ENCODE measurements at regions of chr7 and their contacts with region 1.

Region 1: DNA sequence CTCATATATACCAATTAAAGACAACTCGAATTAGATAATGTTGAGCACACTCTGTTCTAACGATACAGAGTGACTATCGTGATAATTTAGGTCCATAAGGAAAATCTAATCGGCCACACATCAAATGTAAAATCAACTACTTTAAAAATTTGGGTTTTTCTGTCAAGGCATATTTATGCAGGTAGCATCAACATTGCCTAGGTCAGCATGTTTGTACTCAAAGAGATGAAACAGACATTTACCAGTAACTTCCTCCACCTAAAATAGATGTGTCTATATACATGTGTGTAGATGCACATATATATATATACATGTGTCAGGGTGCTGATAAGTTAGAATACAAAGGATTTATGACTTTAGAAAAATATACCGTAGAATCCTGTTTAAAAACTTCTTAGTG is 22.0 kb downstream of the PSMC2 start:
- DNase-seq: no peak
- H3K4me3 ChIP-seq: no peak overlapping the region
- H3K27ac ChIP-seq: no peak overlapping the region
- H3K4me1 ChIP-seq: no peaks in the 10 kb centered on the region
- H3K27me3 ChIP-seq: no peaks in the 10 kb centered on the region
- CTCF ChIP-seq: no peak

Region 2: DNA sequence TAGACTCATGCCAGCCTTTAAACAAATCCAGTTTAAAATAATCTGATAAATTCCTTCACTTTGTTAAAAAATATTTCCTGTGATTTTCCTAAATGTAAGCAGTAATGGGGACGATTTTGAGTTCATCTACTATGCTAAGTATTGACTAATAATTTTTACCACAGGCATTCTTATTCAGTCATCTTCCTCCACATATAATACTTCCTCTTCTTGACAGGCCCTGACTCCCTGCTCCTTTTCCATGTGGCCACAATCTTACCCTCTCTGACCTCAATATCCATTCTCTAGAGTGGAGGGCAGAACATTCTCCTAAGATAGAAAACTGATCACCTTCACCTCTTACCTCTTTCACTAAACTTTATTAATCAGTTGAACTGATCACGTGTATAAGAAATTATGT is 32.7 kb before region 1 on chr7:
- CTCF ChIA-PET with region 1: no interaction called
- POLR2A ChIA-PET with region 1: interaction called, 12 read pairs
- intact Hi-C with region 1: no loop called
- DNase-seq: no peak
- H3K4me3 ChIP-seq: no peak overlapping the region
- H3K27ac ChIP-seq: no peak overlapping the region
- H3K4me1 ChIP-seq: no peaks in the 10 kb centered on the region
- H3K27me3 ChIP-seq: no peaks in the 10 kb centered on the region
- CTCF ChIP-seq: no peak

Region 3: DNA sequence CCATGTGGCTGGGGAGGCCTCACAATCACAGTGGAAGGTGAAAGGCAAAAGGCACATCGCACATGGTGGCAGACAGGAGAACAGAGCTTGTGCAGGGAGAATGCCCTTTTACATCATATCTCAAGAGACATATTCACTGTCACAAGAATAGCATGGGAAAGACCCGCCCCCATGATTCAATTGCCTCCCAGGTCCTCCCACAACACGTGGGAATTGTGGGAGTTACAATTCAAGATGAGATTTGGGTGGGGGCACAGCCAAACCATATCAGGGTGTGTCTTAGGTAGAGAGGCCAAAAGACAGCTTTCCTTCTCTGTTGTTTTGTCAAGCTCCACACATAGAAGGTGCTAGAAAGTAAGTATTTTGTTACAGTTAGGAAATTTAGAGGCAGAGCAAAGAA is 97.4 kb after region 1 on chr7:
- CTCF ChIA-PET with region 1: no interaction called
- POLR2A ChIA-PET with region 1: no interaction called
- intact Hi-C with region 1: no loop called
- DNase-seq: no peak
- H3K4me3 ChIP-seq: no peak overlapping the region
- H3K27ac ChIP-seq: no peak overlapping the region
- H3K4me1 ChIP-seq: no peaks in the 10 kb centered on the region
- H3K27me3 ChIP-seq: peaks cover 73% of the 10 kb centered on the region
- CTCF ChIP-seq: no peak

Region 4: GRCh38 chr7:103843689-103844480 is 474.5 kb after region 1 on chr7:
- CTCF ChIA-PET with region 1: no interaction called
- POLR2A ChIA-PET with region 1: no interaction called
- intact Hi-C with region 1: no loop called
- DNase-seq: no peak
- H3K4me3 ChIP-seq: no peak overlapping the region
- H3K27ac ChIP-seq: no peak overlapping the region
- H3K4me1 ChIP-seq: no peaks in the 10 kb centered on the region
- H3K27me3 ChIP-seq: no peaks in the 10 kb centered on the region
- CTCF ChIP-seq: no peak

Region 5: DNA sequence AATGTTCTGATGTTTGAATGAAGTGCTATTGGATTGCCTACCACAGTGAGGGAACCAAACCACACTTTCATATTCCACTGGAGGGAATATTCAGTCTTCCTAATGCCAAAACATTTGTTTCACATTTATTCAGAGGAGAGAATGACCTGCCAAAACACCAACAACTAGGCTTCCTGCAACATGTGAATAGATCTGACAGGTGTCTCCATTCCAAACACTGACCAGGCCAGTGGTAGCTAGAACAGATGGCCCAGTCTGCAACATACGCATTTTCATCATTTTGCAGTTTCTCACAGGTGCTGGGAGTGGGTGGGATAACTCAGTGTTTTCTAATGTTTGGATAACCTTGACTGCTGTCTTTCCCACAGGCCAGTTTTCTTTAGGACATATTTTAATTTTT is 510.0 kb after region 1 on chr7:
- CTCF ChIA-PET with region 1: no interaction called
- POLR2A ChIA-PET with region 1: no interaction called
- intact Hi-C with region 1: no loop called
- DNase-seq: no peak
- H3K4me3 ChIP-seq: no peak overlapping the region
- H3K27ac ChIP-seq: no peak overlapping the region
- H3K4me1 ChIP-seq: no peaks in the 10 kb centered on the region
- H3K27me3 ChIP-seq: peaks cover 26% of the 10 kb centered on the region
- CTCF ChIP-seq: no peak

Measured in A673 (cell line).